Activated naive CD4-positive, alpha-beta T cell treated with anti-CD3 and anti-CD28 coated beads, Interleukin-2, amount 10 ng/mL, durations not matched to agents 7 days and 5 days (primary cell): ENCODE measurements at regions of chr18 and their contacts with region 1.

Region 1: GRCh38 chr18:54119524-54120019 is 104.9 kb downstream of the MBD2 start:
- DNase-seq: peak; percentile 25
- H3K4me3 Mint-ChIP-seq: no peak overlapping the region
- H3K27ac Mint-ChIP-seq: no peak overlapping the region
- H3K4me1 Mint-ChIP-seq: peaks cover 2% of the 10 kb centered on the region
- H3K27me3 Mint-ChIP-seq: no peaks in the 10 kb centered on the region

Region 2: DNA sequence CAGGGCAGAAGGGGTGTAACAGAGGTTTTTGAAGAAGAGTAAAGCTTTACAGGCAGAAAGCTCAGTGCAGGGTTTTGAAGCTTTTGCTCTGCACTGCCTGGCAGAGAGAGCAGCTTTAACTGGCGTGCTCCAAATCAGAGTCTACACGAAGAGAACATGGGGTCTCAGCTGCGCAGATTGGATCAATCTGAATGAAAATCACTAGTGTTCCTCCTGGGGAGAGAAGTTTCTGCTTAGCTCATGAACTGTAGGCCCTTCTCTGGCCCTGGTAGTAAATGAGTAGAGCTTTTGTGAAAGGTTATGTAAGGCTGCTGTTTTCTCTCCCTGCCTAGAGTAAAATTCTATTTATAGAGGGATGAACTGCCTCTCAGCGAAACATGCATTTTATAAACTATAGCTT is 1766.0 kb before region 1 on chr18:
- CTCF ChIA-PET with region 1: no interaction called
- DNase-seq: no peak
- H3K4me3 Mint-ChIP-seq: no peak overlapping the region
- H3K27ac Mint-ChIP-seq: no peak overlapping the region
- H3K4me1 Mint-ChIP-seq: no peaks in the 10 kb centered on the region
- H3K27me3 Mint-ChIP-seq: no peaks in the 10 kb centered on the region

Region 3: GRCh38 chr18:53567929-53568574 is 551.5 kb before region 1 on chr18:
- CTCF ChIA-PET with region 1: interaction called, 12 read pairs
- DNase-seq: no peak
- H3K4me3 Mint-ChIP-seq: no peak overlapping the region
- H3K27ac Mint-ChIP-seq: no peak overlapping the region
- H3K4me1 Mint-ChIP-seq: no peaks in the 10 kb centered on the region
- H3K27me3 Mint-ChIP-seq: no peaks in the 10 kb centered on the region

Region 4: DNA sequence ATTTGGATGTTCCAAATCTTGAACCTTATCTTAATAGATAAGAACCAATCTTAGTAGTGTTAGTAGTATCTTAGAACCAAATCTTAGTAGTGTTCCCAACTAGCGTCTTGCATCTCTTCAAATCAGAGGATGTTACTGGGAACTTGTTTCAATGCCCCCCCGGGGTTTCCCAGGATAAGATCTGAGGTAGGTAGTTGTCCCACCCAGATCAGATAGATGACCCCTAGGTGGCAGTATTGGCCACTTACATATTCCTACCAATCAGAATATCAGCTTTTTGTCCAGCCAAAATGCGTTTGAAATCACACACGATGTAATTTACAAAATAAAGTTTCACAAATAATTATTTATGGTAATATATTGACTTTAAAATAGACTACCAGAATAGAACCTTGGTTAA is 209.9 kb before region 1 on chr18:
- CTCF ChIA-PET with region 1: interaction called, 50 read pairs
- DNase-seq: peak; percentile 26
- H3K4me3 Mint-ChIP-seq: no peak overlapping the region
- H3K27ac Mint-ChIP-seq: no peak overlapping the region
- H3K4me1 Mint-ChIP-seq: no peaks in the 10 kb centered on the region
- H3K27me3 Mint-ChIP-seq: no peaks in the 10 kb centered on the region

Region 5: DNA sequence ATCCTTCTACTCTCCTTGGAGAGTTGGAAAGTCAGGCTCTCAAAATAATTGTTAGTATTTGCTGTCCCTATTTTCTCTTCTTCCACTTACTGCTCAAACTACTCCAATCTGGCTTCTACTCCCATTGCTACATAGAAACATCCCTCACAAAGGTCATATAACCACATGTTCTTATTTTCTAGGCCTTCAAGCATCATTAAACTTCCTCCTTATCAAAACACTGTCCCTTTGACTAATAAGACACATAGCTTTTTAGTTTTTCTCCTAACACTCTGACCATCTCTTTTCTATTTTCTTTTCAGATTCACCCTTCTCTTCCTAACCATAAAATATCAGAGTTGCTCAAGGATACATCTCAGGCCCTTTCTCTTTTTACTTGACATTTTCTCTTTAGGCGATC is 43.4 kb before region 1 on chr18:
- CTCF ChIA-PET with region 1: no interaction called
- DNase-seq: no peak
- H3K4me3 Mint-ChIP-seq: no peak overlapping the region
- H3K27ac Mint-ChIP-seq: no peak overlapping the region
- H3K4me1 Mint-ChIP-seq: no peaks in the 10 kb centered on the region
- H3K27me3 Mint-ChIP-seq: peaks cover 9% of the 10 kb centered on the region